Gastrocnemius medialis (tissue), 4 donors: ENCODE measurements at regions of chr4 and their contacts with region 1.

Region 1: DNA sequence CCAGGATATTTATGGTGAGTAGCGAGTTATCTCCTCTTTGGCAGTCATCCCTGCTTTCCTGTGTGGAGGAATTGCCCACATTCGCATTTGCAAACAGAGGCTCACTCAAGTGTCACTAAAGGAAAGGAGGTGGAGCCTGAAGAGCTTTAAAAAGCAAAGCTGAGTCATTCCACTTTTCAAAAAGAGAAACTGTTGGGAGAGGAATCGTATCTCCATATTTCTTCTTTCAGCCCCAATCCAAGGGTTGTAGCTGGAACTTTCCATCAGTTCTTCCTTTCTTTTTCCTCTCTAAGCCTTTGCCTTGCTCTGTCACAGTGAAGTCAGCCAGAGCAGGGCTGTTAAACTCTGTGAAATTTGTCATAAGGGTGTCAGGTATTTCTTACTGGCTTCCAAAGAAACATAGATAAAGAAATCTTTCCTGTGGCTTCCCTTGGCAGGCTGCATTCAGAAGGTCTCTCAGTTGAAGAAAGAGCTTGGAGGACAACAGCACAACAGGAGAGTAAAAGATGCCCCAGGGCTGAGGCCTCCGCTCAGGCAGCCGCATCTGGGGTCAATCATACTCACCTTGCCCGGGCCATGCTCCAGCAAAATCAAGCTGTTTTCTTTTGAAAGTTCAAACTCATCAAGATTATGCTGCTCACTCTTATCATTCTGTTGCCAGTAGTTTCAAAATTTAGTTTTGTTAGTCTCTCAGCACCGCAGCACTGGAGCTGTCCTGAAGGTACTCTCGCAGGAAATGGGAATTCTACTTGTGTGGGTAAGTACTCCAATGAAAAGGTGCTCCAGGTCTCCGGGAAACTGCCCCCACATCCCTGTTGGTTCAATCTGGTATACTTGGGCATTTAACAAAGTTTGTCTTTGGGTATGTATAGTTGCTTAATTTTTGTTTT is at the start of gene EGF:
- DNase-seq: peak in 1 of 2 donors; percentile 41
- ATAC-seq: peak; percentile 67 to 72
- H3K4me3 ChIP-seq: peak within 1 kb of the TSS; percentile 59 to 75 (median 62)
- H3K27ac ChIP-seq: peak within 1 kb of the TSS; percentile 91 to 96 (median 93)
- H3K4me1 ChIP-seq: peaks cover 24 to 28% of the 10 kb centered on the region in 2 donors
- H3K27me3 ChIP-seq: no peaks in the 10 kb centered on the region
- CTCF ChIP-seq: no peak
- POLR2A ChIP-seq: peak; percentile 73 to 93
- total RNA-seq, gene EGF: 12.1 to 58.5 (median 21.3) TPM

Region 2: GRCh38 chr4:109967797-109968507 is 55.0 kb after region 1 on chr4:
- in situ Hi-C with region 1: no loop called
- intact Hi-C with region 1: no loop called
- DNase-seq: no peak
- ATAC-seq: no peak
- H3K4me3 ChIP-seq: no peak overlapping the region
- H3K27ac ChIP-seq: no peak overlapping the region
- H3K4me1 ChIP-seq: no peaks in the 10 kb centered on the region
- H3K27me3 ChIP-seq: no peaks in the 10 kb centered on the region
- CTCF ChIP-seq: no peak
- POLR2A ChIP-seq: no peak

Region 3: GRCh38 chr4:110540982-110541440 is 628.1 kb after region 1 on chr4:
- in situ Hi-C with region 1: no loop called
- intact Hi-C with region 1: loop called (anchors 10 kb)
- DNase-seq: no peak
- ATAC-seq: no peak
- H3K4me3 ChIP-seq: no peak overlapping the region
- H3K27ac ChIP-seq: peak overlapping the region; percentile 18 to 63 (median 57)
- H3K4me1 ChIP-seq: peaks cover 13 to 15% of the 10 kb centered on the region in 2 donors
- H3K27me3 ChIP-seq: no peaks in the 10 kb centered on the region
- CTCF ChIP-seq: no peak
- POLR2A ChIP-seq: no peak